ENCODE measurements at regions of chr7 and their contacts with region 1.

Region 1: GRCh38 chr7:21427182-21427870 is 557 bp upstream of the SP4 start:
- DNase-seq: peak; percentile 97 to 100
- H3K4me3 ChIP-seq: peak overlapping the region; percentile 79
- H3K27ac ChIP-seq: peak overlapping the region; percentile 81
- H3K4me1 ChIP-seq: peaks cover 20% of the 10 kb centered on the region
- H3K27me3 ChIP-seq: no peaks in the 10 kb centered on the region
- CTCF ChIP-seq: no peak

Region 2: GRCh38 chr7:21365866-21366624 is 61.3 kb before region 1 on chr7:
- CTCF ChIA-PET with region 1: no interaction called
- POLR2A ChIA-PET with region 1: interaction called, 6 read pairs
- intact Hi-C with region 1: loop called (anchors 1 kb)
- DNase-seq: peak; percentile 20 to 99
- H3K4me3 ChIP-seq: no peak overlapping the region
- H3K27ac ChIP-seq: peak overlapping the region; percentile 45
- H3K4me1 ChIP-seq: peaks cover 23% of the 10 kb centered on the region
- H3K27me3 ChIP-seq: no peaks in the 10 kb centered on the region
- CTCF ChIP-seq: no peak

Region 3: DNA sequence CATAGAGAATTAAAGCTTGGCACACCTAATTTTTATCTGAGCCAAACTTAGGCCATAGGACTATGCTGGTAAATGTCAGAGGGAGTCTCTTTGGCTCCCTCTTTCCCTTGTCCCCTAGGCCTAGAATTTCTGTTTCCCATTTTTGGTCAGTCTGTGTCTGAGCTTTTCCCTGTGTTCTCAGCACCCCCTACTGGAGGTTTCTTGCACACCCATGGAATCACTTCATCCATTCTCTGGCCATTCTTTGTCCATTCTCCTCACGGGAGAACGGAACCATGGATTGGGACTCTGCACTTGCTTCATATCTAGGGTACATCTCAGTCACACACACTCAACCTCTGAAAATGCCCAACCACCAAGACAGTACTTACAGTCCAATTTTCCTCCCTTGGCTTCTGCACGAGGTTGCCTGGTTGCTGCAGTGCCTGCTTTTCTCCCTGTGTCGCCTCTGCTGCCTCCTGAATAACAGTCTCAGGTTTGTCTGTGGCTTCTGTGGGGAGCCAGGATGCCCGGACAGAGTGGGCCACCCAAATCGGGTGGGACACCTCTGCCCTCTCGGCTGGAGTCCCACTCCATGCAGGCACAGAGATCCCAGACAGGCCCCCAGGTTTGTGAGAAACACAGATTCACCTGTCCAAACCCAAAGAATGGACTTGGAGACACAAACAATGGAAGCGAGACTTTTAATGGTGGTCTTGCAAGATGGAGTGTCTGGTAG is 80.5 kb after region 1 on chr7:
- CTCF ChIA-PET with region 1: no interaction called
- POLR2A ChIA-PET with region 1: no interaction called
- intact Hi-C with region 1: loop called (anchors 5 kb)
- DNase-seq: peak in 1 of 2 experiments; percentile 34
- H3K4me3 ChIP-seq: no peak overlapping the region
- H3K27ac ChIP-seq: no peak overlapping the region
- H3K4me1 ChIP-seq: peaks cover 10% of the 10 kb centered on the region
- H3K27me3 ChIP-seq: no peaks in the 10 kb centered on the region
- CTCF ChIP-seq: peak; percentile 89

Region 4: GRCh38 chr7:21617916-21618390 is 190.6 kb after region 1 on chr7:
- CTCF ChIA-PET with region 1: no interaction called
- POLR2A ChIA-PET with region 1: interaction called, 4 read pairs
- intact Hi-C with region 1: loop called (anchors 2 kb)
- DNase-seq: peak; percentile 56 to 97
- H3K4me3 ChIP-seq: peak overlapping the region; percentile 28; the same call in 1 of the 2 replicates
- H3K27ac ChIP-seq: peak overlapping the region; percentile 95
- H3K4me1 ChIP-seq: peaks cover 34% of the 10 kb centered on the region
- H3K27me3 ChIP-seq: no peaks in the 10 kb centered on the region
- CTCF ChIP-seq: no peak

Region 5: DNA sequence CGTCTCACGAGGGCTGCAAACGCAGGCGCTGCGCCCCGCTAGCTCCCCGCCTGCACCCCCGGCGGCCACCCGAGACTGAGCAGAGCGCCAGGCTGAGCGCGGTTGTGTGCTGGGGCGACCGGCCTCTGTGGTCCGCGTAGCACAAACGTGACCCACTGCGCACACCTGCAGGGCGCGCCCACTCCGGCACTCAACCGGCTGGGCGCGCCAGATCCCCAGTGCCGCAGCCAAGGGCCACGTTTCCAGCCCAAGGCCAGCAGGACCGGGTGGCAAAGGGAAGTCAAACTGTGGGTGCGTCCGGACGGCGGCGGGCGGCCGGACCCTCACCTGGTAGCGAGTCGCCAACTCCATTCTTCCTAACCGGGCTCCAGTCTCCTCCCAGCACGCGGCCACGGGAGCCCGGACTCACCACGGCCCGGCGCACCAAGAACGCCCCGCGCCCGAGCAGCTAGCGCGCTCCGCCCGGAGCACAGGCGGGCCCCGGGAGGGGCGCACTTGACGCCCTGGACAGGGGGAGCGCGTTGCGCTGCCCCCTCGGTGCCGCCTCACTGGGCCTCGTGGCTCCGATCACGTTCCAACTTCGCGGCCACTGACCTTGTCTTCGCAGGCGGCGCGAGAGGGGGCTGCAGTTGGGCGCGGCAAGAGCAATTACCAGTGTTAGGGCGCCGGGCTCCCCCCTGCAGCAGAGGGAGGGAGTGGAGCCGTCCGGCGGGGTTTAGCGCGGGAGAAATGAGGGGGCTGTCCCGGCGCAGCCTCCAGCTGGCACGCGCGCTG is 518.3 kb after region 1 on chr7 and contains the start of gene CDCA7L:
- CTCF ChIA-PET with region 1: no interaction called
- POLR2A ChIA-PET with region 1: interaction called, 11 read pairs
- intact Hi-C with region 1: loop called (anchors 5 kb)
- DNase-seq: peak; percentile 79 to 95
- H3K4me3 ChIP-seq: peak within 1 kb of the TSS; percentile 91
- H3K27ac ChIP-seq: peak within 1 kb of the TSS; percentile 94
- H3K4me1 ChIP-seq: peaks cover 53% of the 10 kb centered on the region
- H3K27me3 ChIP-seq: no peaks in the 10 kb centered on the region
- CTCF ChIP-seq: no peak
- total RNA-seq, gene CDCA7L: 243 and 252 TPM in 2 replicates

Region 6: DNA sequence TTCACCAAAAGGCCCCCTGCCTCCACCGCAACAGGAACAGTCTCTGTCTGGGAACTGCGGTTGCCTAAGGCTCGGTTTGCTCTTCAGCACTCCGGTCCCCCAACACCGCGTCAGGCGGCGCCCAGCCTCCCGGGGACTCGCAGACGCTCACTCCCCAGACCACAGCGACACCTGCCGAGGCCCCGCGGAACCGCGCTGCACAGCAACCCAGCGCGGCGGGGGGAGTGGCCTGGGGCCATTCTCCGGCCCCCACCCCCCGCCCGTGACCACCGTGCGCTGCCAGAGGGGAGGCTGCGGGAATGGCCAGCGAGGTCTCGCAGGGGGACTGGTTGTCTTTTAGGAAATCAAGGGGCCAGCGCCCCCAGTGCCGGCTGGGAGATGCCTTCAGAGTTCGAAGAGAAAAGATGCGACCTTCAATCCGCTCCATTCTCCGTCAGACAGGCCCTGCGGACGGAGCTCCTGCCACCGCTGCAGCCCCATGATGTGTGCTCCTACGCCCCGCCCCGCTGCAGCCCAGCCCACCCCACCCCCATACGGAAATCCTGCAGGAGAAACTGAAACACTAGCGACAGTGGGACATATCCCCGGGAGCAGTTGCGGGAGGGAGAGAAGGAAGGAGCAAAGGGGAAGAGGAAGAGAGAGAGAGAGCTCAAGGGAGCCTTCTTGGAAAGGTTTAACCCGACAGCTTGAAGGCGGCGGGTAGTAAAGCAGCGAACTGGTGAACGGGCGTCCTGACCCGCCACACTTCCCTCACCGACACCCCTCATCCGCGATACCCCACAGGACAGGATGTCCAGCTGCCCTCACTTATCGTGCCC is 655.8 kb after region 1 on chr7:
- CTCF ChIA-PET with region 1: no interaction called
- POLR2A ChIA-PET with region 1: no interaction called
- intact Hi-C with region 1: loop called (anchors 5 kb)
- DNase-seq: peak; percentile 64 to 90
- H3K4me3 ChIP-seq: peak overlapping the region; percentile 65
- H3K27ac ChIP-seq: no peak overlapping the region
- H3K4me1 ChIP-seq: peaks cover 11% of the 10 kb centered on the region; the same call in 1 of the 2 replicates
- H3K27me3 ChIP-seq: peaks cover 43% of the 10 kb centered on the region
- CTCF ChIP-seq: peak; percentile 99

Region 7: GRCh38 chr7:22577396-22578001 is 1150.2 kb after region 1 on chr7:
- CTCF ChIA-PET with region 1: no interaction called
- POLR2A ChIA-PET with region 1: no interaction called
- intact Hi-C with region 1: loop called (anchors 10 kb)
- DNase-seq: peak; percentile 54 to 100
- H3K4me3 ChIP-seq: peak overlapping the region; percentile 19; the same call in 1 of the 2 replicates
- H3K27ac ChIP-seq: peak overlapping the region; percentile 95
- H3K4me1 ChIP-seq: peaks cover 78% of the 10 kb centered on the region
- H3K27me3 ChIP-seq: no peaks in the 10 kb centered on the region
- CTCF ChIP-seq: no peak